ENCODE measurements at regions of chr5 and their contacts with region 1.

Region 1: DNA sequence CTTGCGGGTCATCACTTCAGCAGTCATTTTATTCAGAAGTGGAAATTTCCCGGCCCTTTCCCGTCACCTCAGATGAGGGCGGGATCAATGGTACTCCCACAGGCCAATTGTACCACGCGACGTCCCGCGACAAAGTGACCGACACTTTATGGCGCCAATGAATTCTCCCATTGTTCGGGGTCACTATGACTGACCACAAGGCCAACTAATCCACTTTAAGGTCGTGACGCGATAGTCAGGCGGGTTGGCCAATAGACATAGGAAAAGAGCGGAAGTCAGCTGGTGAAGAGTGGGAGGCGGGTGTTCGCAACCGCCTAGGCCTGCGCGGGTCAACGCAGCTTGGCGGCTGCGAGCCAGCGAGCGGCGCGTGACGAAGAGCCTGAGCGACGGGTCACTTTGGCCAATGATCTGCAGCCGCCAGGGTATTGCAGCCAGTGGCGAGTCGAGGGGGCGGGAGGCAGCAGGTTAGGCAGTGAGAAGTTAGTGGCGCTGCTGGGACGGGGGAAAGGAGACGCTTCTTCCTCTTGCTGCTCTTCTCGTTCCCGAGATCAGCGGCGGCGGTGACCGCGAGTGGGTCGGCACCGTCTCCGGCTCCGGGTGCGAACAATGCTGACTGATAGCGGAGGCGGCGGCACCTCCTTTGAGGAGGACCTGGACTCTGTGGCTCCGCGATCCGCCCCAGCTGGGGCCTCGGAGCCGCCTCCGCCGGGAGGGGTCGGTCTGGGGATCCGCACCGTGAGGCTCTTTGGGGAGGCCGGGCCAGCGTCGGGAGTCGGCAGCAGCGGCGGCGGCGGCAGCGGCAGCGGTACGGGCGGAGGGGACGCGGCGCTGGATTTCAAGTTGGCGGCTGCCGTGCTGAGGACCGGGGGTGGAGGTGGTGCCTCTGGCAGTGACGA is at the start of gene ANKHD1:
- DNase-seq: peak; percentile 100
- ATAC-seq: peak; percentile 88
- H3K4me3 ChIP-seq: peak within 1 kb of the TSS; percentile 85
- H3K27ac ChIP-seq: peak within 1 kb of the TSS; percentile 98
- H3K4me1 ChIP-seq: no peaks in the 10 kb centered on the region; the same call in 1 of the 2 replicates
- H3K27me3 ChIP-seq: no peaks in the 10 kb centered on the region
- CTCF ChIP-seq: no peak
- EP300 ChIP-seq: no peak
- POLR2A ChIP-seq: peak; percentile 97
- RAD21 ChIP-seq: no peak
- polyA plus RNA-seq, gene ANKHD1: 31.6 to 36.3 TPM

Region 2: GRCh38 chr5:140547508-140548299 is 146.1 kb after region 1 on chr5 and contains the start of gene EIF4EBP3:
- CTCF ChIA-PET with region 1: no interaction called
- POLR2A ChIA-PET with region 1: interaction called, 5 read pairs
- RAD21 ChIA-PET with region 1: interaction called, 3 read pairs
- SMC1A ChIA-PET with region 1: interaction called, 3 read pairs
- in situ Hi-C with region 1: no loop called
- intact Hi-C with region 1: loop called (anchors 5 kb)
- DNase-seq: peak; percentile 47
- ATAC-seq: peak; percentile 99
- H3K4me3 ChIP-seq: peak within 1 kb of the TSS; percentile 66
- H3K27ac ChIP-seq: peak within 1 kb of the TSS; percentile 77
- H3K4me1 ChIP-seq: peaks cover 19% of the 10 kb centered on the region
- H3K27me3 ChIP-seq: no peaks in the 10 kb centered on the region
- CTCF ChIP-seq: peak; percentile 14 to 62 (median 46); a peak in 5 of 6 replicates
- EP300 ChIP-seq: no peak
- POLR2A ChIP-seq: peak; percentile 87
- RAD21 ChIP-seq: peak; percentile 33; the same call in 1 of the 2 replicates
- polyA plus RNA-seq, gene EIF4EBP3: 6.3 to 16.1 TPM

Region 3: GRCh38 chr5:140557136-140557805 is 155.7 kb after region 1 on chr5 and contains the start of gene SRA1:
- CTCF ChIA-PET with region 1: interaction called, 3 read pairs
- POLR2A ChIA-PET with region 1: interaction called, 11 read pairs
- RAD21 ChIA-PET with region 1: interaction called, 3 read pairs
- SMC1A ChIA-PET with region 1: no interaction called
- in situ Hi-C with region 1: no loop called
- intact Hi-C with region 1: loop called (anchors 5 kb)
- DNase-seq: peak; percentile 60
- ATAC-seq: peak; percentile 93
- H3K4me3 ChIP-seq: peak within 1 kb of the TSS; percentile 91
- H3K27ac ChIP-seq: peak within 1 kb of the TSS; percentile 95
- H3K4me1 ChIP-seq: peaks cover 22% of the 10 kb centered on the region
- H3K27me3 ChIP-seq: no peaks in the 10 kb centered on the region
- CTCF ChIP-seq: no peak
- EP300 ChIP-seq: no peak
- POLR2A ChIP-seq: peak; percentile 97
- RAD21 ChIP-seq: no peak
- polyA plus RNA-seq, gene SRA1: 35.3 to 52.7 TPM

Region 4: GRCh38 chr5:140639148-140639979 is 237.8 kb after region 1 on chr5 and contains the start of gene TMCO6:
- CTCF ChIA-PET with region 1: no interaction called
- POLR2A ChIA-PET with region 1: no interaction called
- RAD21 ChIA-PET with region 1: no interaction called
- SMC1A ChIA-PET with region 1: no interaction called
- in situ Hi-C with region 1: no loop called
- intact Hi-C with region 1: loop called (anchors 5 kb)
- DNase-seq: peak; percentile 73
- ATAC-seq: peak; percentile 97
- H3K4me3 ChIP-seq: peak within 1 kb of the TSS; percentile 85
- H3K27ac ChIP-seq: peak within 1 kb of the TSS; percentile 47
- H3K4me1 ChIP-seq: peaks cover 4% of the 10 kb centered on the region; the same call in 1 of the 2 replicates
- H3K27me3 ChIP-seq: no peaks in the 10 kb centered on the region
- CTCF ChIP-seq: peak; percentile 63 to 71 (median 69)
- EP300 ChIP-seq: no peak
- POLR2A ChIP-seq: peak; percentile 86
- RAD21 ChIP-seq: peak; percentile 16; the same call in 1 of the 2 replicates
- polyA plus RNA-seq, gene TMCO6: 4.1 to 4.3 TPM

Region 5: DNA sequence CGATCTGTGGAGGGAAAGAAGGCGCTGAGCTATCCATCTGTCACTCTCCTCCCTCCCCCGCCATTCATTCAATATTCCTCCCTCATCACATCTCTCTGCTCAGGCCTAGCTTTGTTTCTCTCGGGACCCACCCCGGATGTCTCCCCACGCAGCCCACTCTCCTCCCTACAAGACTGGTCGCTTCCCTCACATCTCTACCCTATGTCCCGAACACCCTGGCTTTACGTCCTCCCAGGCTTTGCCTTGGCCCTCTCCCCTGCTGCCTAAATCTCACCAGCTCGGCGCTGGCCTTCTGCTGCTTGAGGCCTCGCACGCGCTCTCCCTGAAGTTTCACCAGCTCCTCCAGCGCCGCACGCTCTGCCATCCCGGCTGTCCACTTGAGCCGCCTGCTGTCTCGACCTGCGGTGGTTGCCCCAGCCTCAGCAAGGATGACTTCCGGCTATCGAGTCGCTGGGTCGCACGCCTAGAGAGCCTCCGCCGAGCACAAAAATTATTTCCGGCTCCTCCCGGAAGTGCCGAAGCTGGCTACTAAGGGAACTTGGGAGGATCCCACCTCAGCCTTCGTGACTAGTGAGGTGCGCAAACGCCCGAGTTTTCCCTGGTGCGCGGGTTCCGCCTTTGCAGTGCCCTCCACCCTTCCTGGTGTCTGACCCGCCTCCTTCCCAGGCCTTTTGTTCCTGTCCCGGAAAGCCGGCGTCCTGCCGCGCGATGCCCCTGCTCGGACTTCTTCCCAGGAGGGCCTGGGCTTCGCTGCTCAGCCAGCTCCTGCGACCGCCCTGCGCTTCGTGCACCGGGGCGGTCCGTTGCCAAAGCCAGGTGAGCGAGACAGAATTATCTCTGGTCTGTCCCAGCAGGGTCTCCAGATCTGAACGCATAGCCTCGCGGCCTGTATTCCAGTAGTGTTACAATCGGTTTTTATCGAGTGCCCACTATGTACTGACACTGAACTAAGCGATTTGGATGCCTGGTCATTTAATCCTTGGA is 289.6 kb after region 1 on chr5 and contains the starts of genes HARS1 and HARS2:
- CTCF ChIA-PET with region 1: interaction called, 3 read pairs
- POLR2A ChIA-PET with region 1: interaction called, 3 read pairs
- RAD21 ChIA-PET with region 1: interaction called, 4 read pairs
- SMC1A ChIA-PET with region 1: no interaction called
- in situ Hi-C with region 1: no loop called
- intact Hi-C with region 1: loop called (anchors 2 kb)
- DNase-seq: peak; percentile 77
- ATAC-seq: peak; percentile 96
- H3K4me3 ChIP-seq: peak within 1 kb of the TSS; percentile 89
- H3K27ac ChIP-seq: peak within 1 kb of the TSS; percentile 74
- H3K4me1 ChIP-seq: peaks cover 4% of the 10 kb centered on the region; the same call in 1 of the 2 replicates
- H3K27me3 ChIP-seq: no peaks in the 10 kb centered on the region
- CTCF ChIP-seq: no peak
- EP300 ChIP-seq: no peak
- POLR2A ChIP-seq: peak; percentile 97
- RAD21 ChIP-seq: no peak
- polyA plus RNA-seq, gene HARS1: 12.0 to 17.3 TPM
- polyA plus RNA-seq, gene HARS2: 9.3 to 13.1 TPM

Measured in GM12878 (cell line).